ENCODE measurements at regions of chr6 and their contacts with region 1.

Region 1: DNA sequence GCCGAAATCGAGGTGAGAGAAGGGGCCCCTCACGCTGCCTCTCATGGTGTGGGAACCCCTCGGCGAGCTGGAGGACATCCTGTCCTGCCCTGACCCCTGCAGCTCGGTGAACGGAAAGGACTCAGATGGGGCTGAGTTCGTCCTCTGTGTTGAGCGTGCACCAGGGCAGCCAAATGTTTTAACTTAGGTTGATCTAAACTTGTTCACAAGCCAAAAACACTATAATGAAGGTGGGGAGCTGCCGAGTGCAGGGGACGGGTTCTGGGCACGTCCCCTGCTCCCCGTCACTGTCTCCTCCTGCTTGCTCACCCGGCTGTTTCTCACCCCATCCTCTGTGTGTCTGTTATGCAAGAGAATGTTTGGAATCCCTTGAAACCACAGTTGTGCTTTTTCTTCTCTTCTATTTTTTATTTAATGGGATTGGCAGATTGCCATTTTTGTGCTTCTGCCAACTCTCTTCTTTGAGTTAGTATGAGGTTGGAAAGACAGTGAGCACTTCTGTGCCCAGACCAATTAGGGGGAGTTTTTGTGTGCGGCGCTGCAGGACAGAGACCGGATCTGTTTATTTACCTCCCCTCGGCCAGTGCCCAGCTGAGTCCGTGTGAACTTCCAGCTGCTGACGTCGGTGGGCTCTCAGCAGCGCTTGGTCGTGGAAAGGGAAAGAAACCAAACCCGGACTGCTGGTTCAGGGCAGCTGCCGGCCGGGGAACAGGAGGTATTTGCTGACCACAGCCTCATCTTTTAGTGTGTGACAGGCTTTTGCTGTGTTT is 158.1 kb downstream of the DTNBP1 start:
- DNase-seq: peak; percentile 97
- ATAC-seq: peak; percentile 95
- H3K4me3 ChIP-seq: peak overlapping the region; percentile 51; the same call in 1 of the 2 replicates
- H3K27ac ChIP-seq: peak overlapping the region; percentile 75
- H3K4me1 ChIP-seq: peaks cover 15% of the 10 kb centered on the region
- H3K27me3 ChIP-seq: no peaks in the 10 kb centered on the region
- CTCF ChIP-seq: no peak

Region 2: DNA sequence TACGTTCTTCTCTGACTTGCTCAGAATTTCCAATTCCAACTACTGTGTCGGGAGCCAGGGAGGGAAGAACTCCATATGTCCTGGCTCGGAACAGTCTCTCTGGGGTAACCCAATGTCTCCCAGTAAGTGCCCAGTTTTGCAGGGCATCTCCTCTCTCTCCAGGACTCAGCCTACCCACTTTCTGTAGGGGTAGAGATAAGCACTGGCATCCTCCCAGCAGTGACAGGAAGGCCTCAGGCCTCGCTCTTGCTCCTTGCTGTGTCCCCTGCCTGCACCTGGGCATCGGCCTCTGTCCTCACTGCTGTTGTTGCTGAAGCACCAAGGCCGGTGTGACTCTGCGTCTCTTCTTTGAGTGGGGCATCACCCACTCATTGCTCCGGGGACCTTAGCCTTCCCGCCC is 647.8 kb before region 1 on chr6:
- CTCF ChIA-PET with region 1: no interaction called
- POLR2A ChIA-PET with region 1: interaction called, 15 read pairs
- intact Hi-C with region 1: no loop called
- DNase-seq: no peak
- ATAC-seq: no peak
- H3K4me3 ChIP-seq: no peak overlapping the region
- H3K27ac ChIP-seq: no peak overlapping the region
- H3K4me1 ChIP-seq: no peaks in the 10 kb centered on the region
- H3K27me3 ChIP-seq: no peaks in the 10 kb centered on the region
- CTCF ChIP-seq: no peak

Region 3: GRCh38 chr6:15621203-15622044 is 116.7 kb after region 1 on chr6:
- CTCF ChIA-PET with region 1: no interaction called
- POLR2A ChIA-PET with region 1: no interaction called
- intact Hi-C with region 1: loop called (anchors 5 kb)
- DNase-seq: no peak
- ATAC-seq: no peak
- H3K4me3 ChIP-seq: no peak overlapping the region
- H3K27ac ChIP-seq: no peak overlapping the region
- H3K4me1 ChIP-seq: no peaks in the 10 kb centered on the region
- H3K27me3 ChIP-seq: no peaks in the 10 kb centered on the region
- CTCF ChIP-seq: no peak